ENCODE measurements at regions of chr3 and their contacts with region 1.

Region 1: GRCh38 chr3:39288300-39288808 is 8.5 kb upstream of the CX3CR1 start:
- DNase-seq: peak; percentile 54 to 89 (median 80)
- ATAC-seq: peak; percentile 97
- H3K4me3 ChIP-seq: no peak overlapping the region
- H3K27ac ChIP-seq: no peak overlapping the region
- H3K4me1 ChIP-seq: peaks cover 0 to 14% of the 10 kb centered on the region in 2 donors
- H3K27me3 ChIP-seq: no peaks in the 10 kb centered on the region
- CTCF ChIP-seq: peak; percentile 84 to 89

Region 2: GRCh38 chr3:39126532-39127071 is 161.8 kb before region 1 on chr3:
- intact Hi-C with region 1: loop called in 1 of 2 experiments (anchors 5 kb)
- DNase-seq: no peak
- ATAC-seq: peak; percentile 77
- H3K4me3 ChIP-seq: no peak overlapping the region
- H3K27ac ChIP-seq: peak overlapping the region in 1 of 2 donors; percentile 0
- H3K4me1 ChIP-seq: peaks cover 0 to 13% of the 10 kb centered on the region in 2 donors
- H3K27me3 ChIP-seq: no peaks in the 10 kb centered on the region
- CTCF ChIP-seq: peak; percentile 27 to 48

Region 3: DNA sequence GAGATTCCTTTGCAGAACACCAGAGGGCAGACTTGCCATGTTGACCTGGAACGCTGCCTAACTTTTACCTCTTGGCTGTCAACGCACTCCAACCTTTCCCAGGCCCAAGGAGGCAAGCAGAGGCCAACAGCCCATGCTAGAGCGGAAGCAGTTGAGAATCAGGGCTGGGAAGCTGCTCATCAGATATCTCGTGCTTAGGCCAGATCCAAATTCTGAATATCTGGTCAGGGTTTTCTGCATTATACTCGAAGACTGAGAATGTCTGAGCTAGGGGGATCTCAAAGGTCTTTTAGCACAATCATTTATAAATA is 98.4 kb before region 1 on chr3:
- intact Hi-C with region 1: loop called in 1 of 2 experiments (anchors 5 kb)
- DNase-seq: peak in 2 of 4 donors; percentile 63 to 76
- ATAC-seq: peak; percentile 93
- H3K4me3 ChIP-seq: no peak overlapping the region
- H3K27ac ChIP-seq: no peak overlapping the region
- H3K4me1 ChIP-seq: peaks cover 0 to 10% of the 10 kb centered on the region in 2 donors
- H3K27me3 ChIP-seq: no peaks in the 10 kb centered on the region
- CTCF ChIP-seq: peak; percentile 74 to 89

Measured in left lung (tissue), 14 donors.